Dendritic cell treated with granulocyte-macrophage colony-stimulating factor and Interleukin-4, amounts not matched to agents 40 ng/mL and 50 ng/mL, for 4 days (primary cell): ENCODE measurements at regions of chr21 and their contacts with region 1.

Region 1: GRCh38 chr21:33199516-33200217 is 30.1 kb upstream of the IFNAR2 start:
- H3K4me3 Mint-ChIP-seq: no peak overlapping the region
- H3K27ac Mint-ChIP-seq: peak overlapping the region; percentile 94
- H3K4me1 Mint-ChIP-seq: peaks cover 70% of the 10 kb centered on the region
- H3K27me3 Mint-ChIP-seq: no peaks in the 10 kb centered on the region

Region 2: DNA sequence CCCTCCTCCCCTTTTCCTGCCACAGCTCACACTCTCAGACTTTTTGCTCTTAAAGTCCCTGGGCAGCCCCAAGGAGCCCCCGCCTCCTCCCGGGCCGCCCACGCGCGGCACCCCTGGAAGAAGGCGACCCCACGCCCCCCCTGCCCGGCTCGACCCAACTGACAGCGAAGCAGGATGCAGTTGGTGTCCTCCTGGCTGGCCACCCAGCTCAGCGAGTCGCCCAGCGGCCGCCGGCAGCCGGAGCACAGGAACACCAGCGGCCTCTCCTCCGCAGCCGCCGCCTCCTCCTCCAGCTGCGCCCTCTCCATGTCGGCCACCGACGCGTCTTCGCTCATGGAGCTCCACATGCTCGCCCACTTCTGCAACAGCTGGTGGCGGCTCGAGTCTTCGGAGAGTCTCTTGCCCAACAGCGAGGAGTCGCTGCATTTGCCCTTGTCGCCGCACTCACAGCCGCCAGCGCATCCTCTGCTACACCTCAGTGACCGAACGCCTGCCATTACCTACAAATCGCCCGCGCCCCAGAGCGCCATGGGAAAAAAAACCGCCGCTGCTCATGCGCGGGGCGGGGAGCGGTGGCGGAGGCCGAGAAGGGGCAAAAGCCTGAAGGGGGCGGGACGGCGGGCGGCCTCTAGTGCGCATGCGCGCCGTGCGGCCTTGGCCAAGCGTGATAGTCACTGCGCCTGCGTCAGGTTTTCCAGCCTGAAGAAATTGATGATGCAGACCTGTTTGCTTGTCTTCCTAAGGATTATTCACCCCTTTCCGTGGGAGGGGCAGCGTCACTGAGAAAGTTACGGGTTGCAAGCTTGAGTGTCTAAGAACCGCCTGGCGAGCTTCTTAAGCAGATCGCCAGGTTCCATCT is 920.9 kb before region 1 on chr21 and contains the start of gene MIS18A:
- intact Hi-C with region 1: no loop called
- H3K4me3 Mint-ChIP-seq: peak within 1 kb of the TSS; percentile 99
- H3K27ac Mint-ChIP-seq: peak within 1 kb of the TSS; percentile 88
- H3K4me1 Mint-ChIP-seq: peaks cover 26% of the 10 kb centered on the region
- H3K27me3 Mint-ChIP-seq: no peaks in the 10 kb centered on the region

Region 3: GRCh38 chr21:32940079-32941014 is 259.3 kb before region 1 on chr21:
- intact Hi-C with region 1: loop called (anchors 1 kb)
- H3K4me3 Mint-ChIP-seq: no peak overlapping the region
- H3K27ac Mint-ChIP-seq: no peak overlapping the region
- H3K4me1 Mint-ChIP-seq: no peaks in the 10 kb centered on the region
- H3K27me3 Mint-ChIP-seq: peaks cover 17% of the 10 kb centered on the region

Region 4: DNA sequence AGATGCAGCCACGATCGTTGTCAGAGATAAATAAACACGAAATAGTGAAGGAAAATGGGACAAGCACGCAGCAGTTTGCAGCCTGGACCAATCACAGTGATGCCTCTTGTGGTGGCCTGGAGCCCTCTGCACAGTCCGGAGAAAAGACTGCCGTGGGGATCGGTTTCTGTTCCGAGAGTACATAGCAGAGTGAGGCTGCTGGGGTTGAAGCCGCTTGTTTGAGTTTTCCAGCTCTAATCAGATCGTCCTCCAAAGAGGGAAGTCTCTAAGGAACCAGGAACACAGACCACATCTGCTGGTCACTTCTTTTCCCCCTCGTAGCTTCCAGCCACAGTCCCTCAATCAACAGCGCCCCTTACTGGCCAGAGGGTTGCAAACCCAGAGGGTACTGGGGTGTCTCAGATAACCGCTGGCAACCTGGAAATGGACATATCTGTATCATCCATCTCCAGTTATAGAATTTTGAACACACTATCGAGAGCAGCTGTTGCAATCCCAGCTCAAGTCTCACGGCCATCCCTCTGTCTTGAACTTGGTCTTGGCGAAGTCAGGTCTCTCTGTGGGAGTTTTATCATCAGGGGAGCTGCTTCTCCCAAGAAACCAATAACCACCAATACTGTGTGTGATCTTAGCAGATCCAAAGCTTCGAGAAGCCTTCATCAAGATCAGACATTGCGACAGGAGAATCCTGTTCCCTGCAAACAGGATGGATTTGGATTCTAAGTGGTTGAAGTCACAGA is 72.3 kb before region 1 on chr21:
- intact Hi-C with region 1: loop called (anchors 5 kb)
- H3K4me3 Mint-ChIP-seq: peak overlapping the region; percentile 64
- H3K27ac Mint-ChIP-seq: no peak overlapping the region
- H3K4me1 Mint-ChIP-seq: peaks cover 38% of the 10 kb centered on the region
- H3K27me3 Mint-ChIP-seq: peaks cover 33% of the 10 kb centered on the region

Region 5: DNA sequence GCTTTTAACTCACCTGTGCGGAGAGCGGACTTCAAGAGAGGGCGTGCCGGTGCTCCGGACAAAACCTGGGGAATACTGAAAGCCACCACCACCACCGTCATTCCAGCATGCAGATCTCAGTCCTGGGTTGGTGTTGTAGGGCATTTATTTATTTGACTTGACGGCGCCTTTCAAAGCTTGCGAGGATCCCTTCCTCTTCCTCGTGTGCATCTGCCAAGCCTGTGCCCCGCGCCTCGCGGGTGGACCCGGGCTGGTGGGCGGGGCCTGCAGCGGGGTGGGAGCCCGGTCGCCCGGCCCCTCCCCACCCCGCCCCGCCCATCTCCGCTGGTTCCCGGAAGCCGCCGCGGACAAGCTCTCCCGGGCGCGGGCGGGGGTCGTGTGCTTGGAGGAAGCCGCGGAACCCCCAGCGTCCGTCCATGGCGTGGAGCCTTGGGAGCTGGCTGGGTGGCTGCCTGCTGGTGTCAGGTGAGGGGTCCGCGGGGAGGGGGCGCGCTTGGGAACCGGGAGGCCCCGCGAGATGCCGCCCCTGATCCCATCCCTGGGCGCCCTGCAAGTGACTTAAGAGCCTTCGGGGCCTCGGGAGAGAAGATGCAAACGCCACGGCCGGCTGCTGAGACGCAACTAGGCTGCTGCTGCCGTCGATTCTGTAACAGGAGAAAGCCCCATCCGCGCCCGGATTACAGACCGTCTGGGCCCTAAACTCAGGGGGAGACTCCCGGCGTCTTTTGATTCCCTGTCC is 66.6 kb after region 1 on chr21 and contains the start of gene IL10RB:
- intact Hi-C with region 1: loop called (anchors 1 kb)
- H3K4me3 Mint-ChIP-seq: peak within 1 kb of the TSS; percentile 92
- H3K27ac Mint-ChIP-seq: peak within 1 kb of the TSS; percentile 93
- H3K4me1 Mint-ChIP-seq: peaks cover 76% of the 10 kb centered on the region
- H3K27me3 Mint-ChIP-seq: no peaks in the 10 kb centered on the region

Region 6: DNA sequence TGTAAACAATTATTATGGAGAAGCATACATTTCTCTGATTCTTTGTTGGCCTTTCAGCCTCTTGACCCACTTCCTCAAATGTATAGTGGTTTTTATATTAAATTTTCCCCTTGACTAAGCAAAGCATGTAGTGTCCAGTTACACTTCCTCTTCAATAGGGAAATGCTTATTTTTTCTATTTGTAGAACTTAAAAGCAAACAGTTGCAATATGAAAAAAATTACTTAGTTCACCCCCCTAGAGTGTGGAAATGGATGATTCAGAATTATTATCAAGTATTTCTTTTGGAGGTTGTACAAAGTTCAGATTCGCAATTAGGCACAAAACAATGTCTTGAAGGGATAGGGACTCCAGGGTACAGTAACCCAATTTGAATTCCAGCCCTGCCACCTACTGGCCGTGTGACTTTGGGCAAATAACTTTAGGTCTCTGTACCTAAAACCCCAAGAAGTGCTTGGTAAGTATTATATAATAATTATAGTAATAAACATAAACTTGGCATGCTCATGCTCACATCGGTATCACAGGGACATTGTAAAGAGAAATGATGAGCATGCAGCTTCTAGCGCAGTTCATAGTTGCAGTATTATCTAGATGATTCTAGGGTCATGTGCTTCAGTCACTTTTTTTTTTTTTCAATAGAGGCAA is 174.9 kb after region 1 on chr21:
- intact Hi-C with region 1: loop called (anchors 10 kb)
- H3K4me3 Mint-ChIP-seq: no peak overlapping the region
- H3K27ac Mint-ChIP-seq: peak overlapping the region; percentile 87
- H3K4me1 Mint-ChIP-seq: peaks cover 60% of the 10 kb centered on the region
- H3K27me3 Mint-ChIP-seq: no peaks in the 10 kb centered on the region

Region 7: DNA sequence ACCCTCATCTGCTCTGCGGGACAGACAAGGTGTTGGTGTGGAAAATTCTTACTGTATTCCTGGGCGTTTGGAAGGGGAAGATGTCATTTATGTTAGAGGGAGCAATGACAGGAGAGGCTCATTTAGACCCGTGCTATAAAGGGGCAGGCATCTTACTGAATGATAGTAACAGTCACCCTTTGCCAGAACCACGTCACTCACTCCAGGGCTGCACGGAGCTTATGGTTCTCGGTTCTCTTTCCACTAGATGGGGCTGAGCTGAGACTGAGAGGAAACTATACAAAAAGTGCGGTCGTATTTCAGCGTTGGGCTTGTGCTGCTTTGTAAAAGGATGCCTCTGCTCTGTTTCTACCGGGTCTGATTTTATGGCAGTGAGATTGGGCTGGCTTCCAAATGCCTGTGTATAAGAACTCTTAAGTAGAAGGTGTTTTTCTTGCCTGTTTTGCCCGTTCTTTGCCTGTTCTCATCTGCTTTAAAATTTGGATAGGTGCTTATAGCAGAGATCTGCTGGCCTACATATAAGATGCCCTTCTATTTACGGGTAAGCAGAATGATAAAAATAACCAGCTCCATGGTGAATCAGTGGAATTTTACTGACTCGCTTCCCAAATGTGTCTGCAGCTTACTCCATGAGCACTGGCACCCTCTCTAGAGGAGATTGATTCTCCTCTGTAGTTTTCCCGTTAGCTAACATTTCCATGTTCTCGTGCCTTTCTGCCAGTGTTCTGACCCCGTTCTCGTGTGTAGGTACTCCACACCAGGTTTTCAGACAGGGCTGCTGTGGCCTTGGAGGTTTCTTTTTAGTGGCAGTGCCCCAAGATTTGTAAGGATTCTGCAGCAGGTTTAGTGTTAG is 929.6 kb after region 1 on chr21:
- intact Hi-C with region 1: no loop called
- H3K4me3 Mint-ChIP-seq: no peak overlapping the region
- H3K27ac Mint-ChIP-seq: no peak overlapping the region
- H3K4me1 Mint-ChIP-seq: peaks cover 70% of the 10 kb centered on the region
- H3K27me3 Mint-ChIP-seq: no peaks in the 10 kb centered on the region